HepG2 (cell line): ENCODE measurements at regions of chr4 and their contacts with region 1.

Region 1: GRCh38 chr4:158671915-158672806 is at the start of gene ETFDH:
- DNase-seq: peak; percentile 99
- ATAC-seq: peak; percentile 87
- H3K4me3 ChIP-seq: peak within 1 kb of the TSS; percentile 80 to 90 (median 83)
- H3K27ac ChIP-seq: peak within 1 kb of the TSS; percentile 90
- H3K4me1 ChIP-seq: peaks cover 28% of the 10 kb centered on the region
- H3K27me3 ChIP-seq: no peaks in the 10 kb centered on the region
- CTCF ChIP-seq: peak; percentile 99
- EP300 ChIP-seq: peak in 1 of 2 experiments; percentile 33; a peak in 3 of 4 replicates
- POLR2A ChIP-seq: peak; percentile 52 to 57
- RAD21 ChIP-seq: peak; percentile 66
- total RNA-seq, gene ETFDH: 13.5 and 14.7 TPM in 2 replicates

Region 2: DNA sequence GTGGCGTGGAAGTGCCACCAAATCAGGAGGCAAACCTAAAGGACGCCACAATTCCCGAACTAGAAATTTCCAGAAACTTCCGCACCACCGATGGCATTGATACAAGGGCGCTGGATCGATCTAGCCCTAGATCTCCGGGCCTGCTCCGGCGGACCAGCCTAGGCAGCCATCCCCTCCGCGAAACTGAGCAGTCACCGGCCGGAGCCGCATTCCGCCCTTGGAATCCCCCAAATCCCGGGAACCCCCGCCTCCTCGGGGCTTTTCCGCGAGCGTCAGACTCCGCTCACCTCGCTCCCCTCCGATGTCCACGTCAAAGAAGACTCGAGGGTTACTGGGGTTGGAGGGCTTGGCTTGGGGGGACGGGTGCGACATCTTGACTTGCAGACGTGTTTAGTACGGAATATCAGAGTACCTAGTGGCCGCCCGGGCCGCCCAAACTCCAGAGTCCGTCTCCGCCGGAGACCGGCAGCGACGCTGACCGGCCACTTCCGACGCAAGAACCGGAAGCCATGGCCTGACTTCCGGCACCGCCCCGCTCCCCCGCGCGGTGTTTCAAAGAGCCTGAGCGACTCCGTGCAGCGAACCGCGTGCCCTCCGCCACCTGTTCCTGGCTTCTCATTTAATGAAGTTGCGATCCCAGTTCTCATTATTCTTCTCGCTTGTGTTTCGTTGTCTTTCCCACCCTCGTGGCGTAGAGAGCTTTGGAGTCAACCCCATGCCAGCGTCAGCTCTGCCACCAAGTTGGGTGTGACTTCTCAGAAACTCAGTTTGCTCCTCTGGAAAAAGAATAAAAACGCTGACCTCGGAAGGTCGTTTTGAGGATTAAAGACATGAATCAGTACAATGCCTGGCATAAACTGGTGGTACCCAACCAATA is 51.0 kb after region 1 on chr4 and contains the start of gene PPID:
- CTCF ChIA-PET with region 1: no interaction called
- POLR2A ChIA-PET with region 1: no interaction called
- in situ Hi-C with region 1: no loop called
- intact Hi-C with region 1: loop called (anchors 1 kb)
- DNase-seq: peak; percentile 77
- ATAC-seq: peak; percentile 98
- H3K4me3 ChIP-seq: peak within 1 kb of the TSS; percentile 80 to 96 (median 93)
- H3K27ac ChIP-seq: peak within 1 kb of the TSS; percentile 81
- H3K4me1 ChIP-seq: peaks cover 40% of the 10 kb centered on the region
- H3K27me3 ChIP-seq: no peaks in the 10 kb centered on the region; a peak in 1 of 5 replicates
- CTCF ChIP-seq: 0 out of 2 replicates have a peak, but pooled peaks have one; percentile 9
- EP300 ChIP-seq: 0 out of 4 replicates have a peak, but pooled peaks of 1 of the 2 experiments have one; percentile 15
- POLR2A ChIP-seq: peak; percentile 84 to 87
- RAD21 ChIP-seq: peak; percentile 49; the same call in 1 of the 2 replicates
- total RNA-seq, gene PPID: 63.4 and 73.3 TPM in 2 replicates

Region 3: DNA sequence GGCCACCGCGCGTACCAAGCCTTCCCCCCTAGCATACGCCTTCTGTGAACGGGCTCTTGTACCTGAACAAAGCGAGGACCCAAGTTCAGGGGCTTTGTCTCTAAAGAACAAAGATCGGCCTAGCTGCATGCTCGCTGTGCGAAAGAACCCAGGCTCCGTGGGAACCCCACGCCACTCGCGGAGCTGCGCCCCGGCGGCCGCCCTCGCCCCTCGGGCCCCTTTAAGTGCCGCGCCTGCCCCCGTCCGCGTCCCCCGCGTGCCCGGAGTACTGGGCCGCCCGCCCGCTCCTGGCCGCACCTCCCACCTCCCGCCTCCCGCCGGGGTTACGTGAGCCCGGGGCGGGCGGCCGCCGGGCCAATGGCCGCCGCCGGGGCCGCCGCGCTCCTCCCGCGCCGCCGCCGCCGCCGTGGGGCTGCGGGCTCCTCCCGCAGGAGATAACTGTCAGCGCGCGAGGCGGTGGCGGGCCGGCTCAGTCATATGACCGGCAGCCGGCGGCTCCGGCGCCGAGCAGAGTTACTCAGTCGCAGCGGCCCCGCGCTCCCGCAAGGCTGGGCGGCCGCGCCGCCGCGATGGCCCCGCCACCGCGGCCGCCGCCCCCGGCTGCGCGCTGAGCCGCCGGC is 96.5 kb after region 1 on chr4 and contains the start of gene FNIP2:
- CTCF ChIA-PET with region 1: no interaction called
- POLR2A ChIA-PET with region 1: no interaction called
- in situ Hi-C with region 1: no loop called
- intact Hi-C with region 1: loop called (anchors 2 kb)
- DNase-seq: peak; percentile 56
- ATAC-seq: peak; percentile 96
- H3K4me3 ChIP-seq: peak within 1 kb of the TSS; percentile 91 to 99 (median 92)
- H3K27ac ChIP-seq: peak within 1 kb of the TSS; percentile 92
- H3K4me1 ChIP-seq: peaks cover 54% of the 10 kb centered on the region
- H3K27me3 ChIP-seq: no peaks in the 10 kb centered on the region; a peak in 1 of 5 replicates
- CTCF ChIP-seq: no peak; the same call in 1 of the 2 replicates
- EP300 ChIP-seq: no peak
- POLR2A ChIP-seq: peak; percentile 75 to 91
- RAD21 ChIP-seq: no peak; the same call in 1 of the 2 replicates
- total RNA-seq, gene FNIP2: 15.5 and 21.8 TPM in 2 replicates

Region 4: DNA sequence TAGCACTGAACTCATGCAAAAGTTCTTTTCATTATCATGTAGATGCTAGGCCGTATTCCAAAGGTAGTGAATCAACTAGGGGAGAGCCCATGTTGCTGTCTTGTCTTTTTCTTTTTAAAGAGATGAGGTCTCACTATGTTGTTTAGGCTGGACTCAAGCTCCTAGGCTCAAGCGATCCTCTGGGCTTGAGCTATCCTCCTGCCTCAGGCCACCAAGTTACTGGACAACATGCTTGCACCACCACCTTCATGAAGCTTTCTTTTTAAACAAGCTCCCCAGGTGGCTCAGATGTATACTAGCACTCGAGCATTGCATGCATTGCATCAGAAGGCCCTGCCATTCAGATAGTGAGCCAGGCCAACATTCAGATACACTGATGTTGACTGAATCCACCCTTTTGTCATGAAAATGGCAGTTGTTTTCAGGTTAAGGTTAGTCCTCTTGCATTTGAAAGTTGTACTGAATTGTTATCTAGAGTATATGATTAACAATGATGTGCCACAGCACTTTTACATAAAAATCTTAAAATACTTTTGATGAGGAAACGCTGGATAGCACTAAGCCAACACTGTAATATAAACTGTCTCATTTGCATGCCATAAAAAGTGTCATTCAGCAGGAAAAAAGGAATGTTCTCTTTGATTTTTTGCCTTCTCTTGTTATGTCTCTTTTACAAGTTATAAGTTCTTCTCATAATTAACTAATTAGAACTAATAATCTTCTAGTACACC is 173.3 kb after region 1 on chr4:
- CTCF ChIA-PET with region 1: no interaction called
- POLR2A ChIA-PET with region 1: no interaction called
- in situ Hi-C with region 1: no loop called
- intact Hi-C with region 1: loop called (anchors 5 kb)
- DNase-seq: no peak
- ATAC-seq: peak; percentile 76
- H3K4me3 ChIP-seq: no peak overlapping the region
- H3K27ac ChIP-seq: no peak overlapping the region
- H3K4me1 ChIP-seq: peaks cover 33% of the 10 kb centered on the region
- H3K27me3 ChIP-seq: no peaks in the 10 kb centered on the region
- CTCF ChIP-seq: no peak
- EP300 ChIP-seq: no peak
- POLR2A ChIP-seq: no peak
- RAD21 ChIP-seq: no peak

Region 5: GRCh38 chr4:159201168-159201567 is 529.0 kb after region 1 on chr4:
- CTCF ChIA-PET with region 1: interaction called, 6 read pairs
- POLR2A ChIA-PET with region 1: no interaction called
- in situ Hi-C with region 1: no loop called
- intact Hi-C with region 1: loop called (anchors 5 kb)
- DNase-seq: no peak
- ATAC-seq: no peak
- H3K4me3 ChIP-seq: no peak overlapping the region
- H3K27ac ChIP-seq: no peak overlapping the region
- H3K4me1 ChIP-seq: no peaks in the 10 kb centered on the region
- H3K27me3 ChIP-seq: no peaks in the 10 kb centered on the region
- CTCF ChIP-seq: no peak
- EP300 ChIP-seq: no peak
- POLR2A ChIP-seq: no peak
- RAD21 ChIP-seq: no peak